AG04449 (cell line): ENCODE measurements at regions of chr14 and their contacts with region 1.

Region 1: GRCh38 chr14:22570132-22570949 is 18.7 kb downstream of the DAD1 start:
- DNase-seq: no peak
- H3K4me3 ChIP-seq: no peak overlapping the region
- CTCF ChIP-seq: peak; percentile 37

Region 2: GRCh38 chr14:22386924-22387775 is 183.2 kb before region 1 on chr14:
- CTCF ChIA-PET with region 1: interaction called, 395 read pairs
- POLR2A ChIA-PET with region 1: no interaction called
- DNase-seq: no peak
- H3K4me3 ChIP-seq: peak overlapping the region; percentile 13
- CTCF ChIP-seq: peak; percentile 68

Region 3: DNA sequence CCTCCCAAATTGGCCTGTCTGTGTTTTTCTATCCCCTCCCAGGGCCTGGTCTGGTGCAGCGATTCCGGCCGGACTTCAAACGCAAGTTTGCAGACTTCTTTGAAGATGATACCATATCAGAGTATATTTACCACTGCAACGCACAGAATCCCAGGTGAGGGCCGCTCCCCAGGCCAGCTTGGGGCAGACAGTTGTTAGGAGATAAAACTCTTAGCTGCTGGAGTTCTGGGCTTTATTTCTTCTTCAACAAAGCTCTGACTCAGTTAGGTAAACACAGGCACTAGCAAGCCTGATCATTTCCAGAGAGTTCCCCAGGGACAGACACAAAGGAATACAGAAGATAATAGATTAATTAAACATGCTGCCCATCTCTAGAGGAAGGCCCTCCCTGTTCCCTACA is 36.0 kb after region 1 on chr14:
- CTCF ChIA-PET with region 1: interaction called, 43 read pairs
- POLR2A ChIA-PET with region 1: no interaction called
- DNase-seq: no peak
- H3K4me3 ChIP-seq: no peak overlapping the region
- CTCF ChIP-seq: no peak

Region 4: GRCh38 chr14:22653012-22653621 is 82.8 kb after region 1 on chr14:
- CTCF ChIA-PET with region 1: interaction called, 299 read pairs
- POLR2A ChIA-PET with region 1: interaction called, 5 read pairs
- DNase-seq: no peak
- H3K4me3 ChIP-seq: no peak overlapping the region
- CTCF ChIP-seq: peak; percentile 94

Region 5: DNA sequence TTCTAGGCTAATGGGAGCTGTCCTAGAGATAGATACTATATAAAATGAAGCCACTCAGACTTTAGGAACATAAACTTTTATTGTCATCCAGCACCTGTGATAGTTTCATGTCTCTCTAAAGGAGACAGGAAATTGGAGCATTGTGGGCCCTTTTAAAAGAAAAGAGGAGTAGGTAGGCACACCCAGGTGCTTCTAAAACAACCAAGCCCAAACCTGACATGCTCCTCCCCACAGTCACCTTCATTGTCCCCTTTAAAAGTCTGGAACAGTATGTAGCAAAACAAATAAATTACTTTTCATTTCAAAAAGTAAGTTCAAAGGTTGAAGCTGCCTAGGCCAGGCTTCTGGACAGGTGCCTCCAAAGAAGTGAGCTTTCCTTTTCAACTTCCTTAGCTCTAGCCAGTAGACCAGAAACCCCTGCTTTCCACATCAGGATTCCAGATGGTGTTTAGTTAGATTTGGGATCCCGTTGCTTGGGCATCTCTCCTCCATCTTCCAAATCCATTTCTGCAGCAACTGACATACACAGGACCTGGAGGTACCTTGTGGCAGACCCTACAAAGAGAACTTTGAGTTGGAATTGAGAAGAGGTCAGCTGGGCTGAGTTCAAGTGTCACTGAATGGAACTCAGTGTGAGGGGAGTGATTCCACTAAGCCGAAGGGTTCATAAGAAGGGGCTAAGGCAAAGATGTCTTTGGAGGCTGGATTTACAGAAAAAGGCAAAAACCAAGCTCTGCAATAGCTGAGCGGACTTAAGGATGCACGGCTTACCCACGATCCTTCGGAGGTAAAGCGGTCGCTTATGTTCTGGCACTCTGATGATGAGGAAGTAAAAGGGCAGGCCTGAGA is 203.0 kb after region 1 on chr14:
- CTCF ChIA-PET with region 1: interaction called, 49 read pairs
- POLR2A ChIA-PET with region 1: no interaction called
- DNase-seq: no peak
- H3K4me3 ChIP-seq: no peak overlapping the region
- CTCF ChIP-seq: no peak

Region 6: DNA sequence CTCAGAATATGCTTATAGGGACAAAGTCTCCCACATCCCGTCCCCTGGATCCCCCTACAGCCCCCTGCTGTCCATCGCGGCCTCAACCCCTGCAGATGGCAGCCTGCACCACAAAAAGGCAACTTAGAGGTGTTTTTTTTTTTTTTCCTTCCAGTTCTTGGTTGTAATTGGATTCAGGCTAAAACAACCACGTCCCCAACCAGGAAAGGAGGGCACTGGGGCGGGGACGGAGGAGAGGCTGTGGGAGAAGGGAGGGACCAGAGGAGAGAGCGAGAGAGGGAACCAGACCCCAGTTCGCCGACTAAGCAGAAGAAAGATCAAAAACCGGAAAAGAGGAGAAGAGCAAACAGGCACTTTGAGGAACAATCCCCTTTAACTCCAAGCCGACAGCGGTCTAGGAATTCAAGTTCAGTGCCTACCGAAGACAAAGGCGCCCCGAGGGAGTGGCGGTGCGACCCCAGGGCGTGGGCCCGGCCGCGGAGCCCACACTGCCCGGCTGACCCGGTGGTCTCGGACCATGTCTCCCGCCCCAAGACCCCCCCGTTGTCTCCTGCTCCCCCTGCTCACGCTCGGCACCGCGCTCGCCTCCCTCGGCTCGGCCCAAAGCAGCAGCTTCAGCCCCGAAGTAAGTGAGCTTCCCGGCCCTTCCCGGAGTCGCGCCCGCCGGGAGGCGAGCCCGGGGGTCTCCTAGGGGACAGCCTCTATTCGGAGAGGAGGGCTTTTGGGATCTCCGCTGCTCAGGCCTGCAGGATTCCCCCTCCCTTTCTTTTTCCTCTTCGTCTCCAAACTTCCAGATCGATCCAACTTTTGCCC is 266.2 kb after region 1 on chr14 and contains the start of gene MMP14:
- CTCF ChIA-PET with region 1: interaction called, 16 read pairs
- POLR2A ChIA-PET with region 1: no interaction called
- DNase-seq: no peak
- H3K4me3 ChIP-seq: peak within 1 kb of the TSS; percentile 90
- CTCF ChIP-seq: peak; percentile 58

Region 7: DNA sequence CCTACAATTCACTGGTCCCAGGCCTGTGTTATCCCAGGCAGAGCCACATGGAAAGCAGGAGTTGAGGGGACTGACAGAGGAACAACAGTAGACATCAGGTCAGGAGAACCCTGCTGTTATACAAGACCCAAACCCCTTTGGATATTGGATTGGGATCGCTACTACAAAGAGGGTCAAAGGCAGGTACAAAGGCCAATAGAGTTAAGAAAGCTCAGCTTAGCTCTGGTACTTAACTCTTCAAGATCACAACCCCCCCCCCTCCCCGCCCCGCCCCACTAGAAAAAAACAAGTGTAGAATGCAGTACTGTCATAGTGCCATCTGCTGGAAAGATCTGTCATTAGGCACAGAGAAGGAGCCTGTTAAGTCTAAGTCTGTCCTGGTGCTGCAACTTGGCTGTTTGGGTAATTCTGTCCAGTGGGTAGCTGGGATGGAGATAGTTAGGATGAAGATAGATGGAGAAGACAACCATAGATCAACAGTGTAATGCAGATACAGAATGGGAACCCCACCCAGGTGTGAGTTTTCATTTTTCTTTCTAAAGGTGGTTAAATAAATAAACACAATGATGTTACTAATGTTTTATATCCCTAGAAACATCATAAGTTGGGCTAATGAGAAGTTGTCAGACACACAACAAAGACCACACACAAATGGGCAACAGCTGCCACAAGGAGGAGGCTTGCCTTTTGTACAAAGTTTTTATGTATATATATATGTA is 329.9 kb after region 1 on chr14:
- CTCF ChIA-PET with region 1: interaction called, 16 read pairs
- POLR2A ChIA-PET with region 1: no interaction called
- DNase-seq: no peak
- H3K4me3 ChIP-seq: no peak overlapping the region
- CTCF ChIP-seq: peak; percentile 72